Cardiac septum (tissue), 1 donor: ENCODE measurements at regions of chrX and their contacts with region 1.

Region 1: DNA sequence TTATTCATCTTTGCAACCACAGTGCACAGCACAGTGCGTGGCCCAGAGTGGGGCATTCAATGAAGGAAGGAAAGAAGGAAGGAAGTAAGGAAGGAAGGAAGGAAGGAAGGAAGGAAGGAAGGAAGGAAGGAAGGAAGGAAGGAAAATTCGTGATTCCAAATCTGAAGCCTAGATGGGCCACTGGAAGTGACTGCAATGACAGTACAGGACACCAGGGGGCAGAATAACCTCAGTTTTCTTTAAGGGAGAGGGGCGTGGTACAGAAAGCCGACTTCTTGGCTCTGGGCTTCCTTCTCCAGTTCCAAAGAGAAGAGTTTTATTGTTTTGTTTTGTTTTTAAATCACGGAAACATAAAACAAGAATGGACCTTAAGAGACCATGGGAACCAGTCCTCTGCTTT is 47.8 kb downstream of the APLN start:
- DNase-seq: no peak

Region 2: DNA sequence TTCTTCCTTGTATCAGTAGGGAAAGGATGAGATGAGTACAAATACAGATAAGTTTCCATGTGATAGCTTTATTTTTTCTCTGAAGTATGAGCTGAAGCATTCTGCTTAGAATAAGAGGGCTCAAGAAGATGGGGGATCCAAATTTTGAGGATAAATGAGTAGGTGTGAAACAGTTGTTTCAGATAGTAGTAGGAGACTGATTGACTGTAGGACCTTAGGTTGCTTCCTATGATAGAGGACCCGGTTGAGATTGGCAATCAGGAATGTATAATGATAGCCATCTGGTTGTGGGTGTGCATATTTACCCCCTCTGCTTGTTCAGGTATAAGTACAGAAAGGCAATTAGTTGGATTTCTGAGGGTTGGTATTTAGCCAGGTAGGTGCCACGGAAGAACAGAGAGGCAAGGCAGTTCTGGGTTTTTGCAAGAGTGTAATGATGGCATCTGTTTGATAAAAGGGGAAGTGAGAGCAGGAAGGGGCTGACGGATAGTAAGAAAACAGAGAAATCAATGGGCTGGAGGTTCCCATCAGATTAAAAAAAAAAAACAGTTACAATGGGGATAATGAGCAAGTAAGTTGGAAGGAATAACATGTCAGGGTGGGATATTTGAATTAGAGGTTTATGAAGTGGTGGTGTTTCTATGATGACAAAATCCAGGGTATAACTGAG is 53.2 kb before region 1 on chrX:
- intact Hi-C with region 1: no loop called
- DNase-seq: no peak

Region 3: DNA sequence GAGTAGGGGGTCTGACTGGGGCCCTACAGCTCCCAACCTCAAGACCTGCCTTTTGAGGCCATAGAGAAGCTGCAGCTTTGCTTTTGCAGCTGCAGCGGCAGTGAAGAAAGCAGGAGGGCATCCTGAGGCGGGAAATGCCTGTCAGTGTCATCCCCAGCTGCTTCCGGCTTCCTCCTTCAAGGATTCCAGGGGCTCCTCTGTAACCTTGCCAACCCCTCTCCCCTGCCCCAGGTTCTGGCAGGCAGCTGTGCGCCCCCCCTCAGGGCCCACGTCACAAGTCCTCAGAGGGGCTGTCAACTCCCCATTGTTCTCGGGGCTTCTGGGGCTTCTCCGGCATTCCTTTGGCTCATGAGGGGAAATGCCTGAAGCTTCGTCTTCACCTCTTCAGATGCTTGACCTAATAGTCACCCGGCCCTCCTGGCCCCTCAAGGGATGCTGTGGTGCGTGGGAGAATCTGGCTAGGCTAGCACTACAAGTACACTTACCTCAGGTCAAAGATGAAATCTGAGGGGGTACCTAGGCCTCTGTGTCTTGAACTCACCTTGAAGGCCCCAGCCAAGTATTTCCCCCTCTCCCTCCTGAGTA is 15.9 kb after region 1 on chrX:
- intact Hi-C with region 1: no loop called
- DNase-seq: no peak

Region 4: GRCh38 chrX:129665910-129666644 is 59.2 kb after region 1 on chrX:
- intact Hi-C with region 1: no loop called
- DNase-seq: no peak

Region 5: DNA sequence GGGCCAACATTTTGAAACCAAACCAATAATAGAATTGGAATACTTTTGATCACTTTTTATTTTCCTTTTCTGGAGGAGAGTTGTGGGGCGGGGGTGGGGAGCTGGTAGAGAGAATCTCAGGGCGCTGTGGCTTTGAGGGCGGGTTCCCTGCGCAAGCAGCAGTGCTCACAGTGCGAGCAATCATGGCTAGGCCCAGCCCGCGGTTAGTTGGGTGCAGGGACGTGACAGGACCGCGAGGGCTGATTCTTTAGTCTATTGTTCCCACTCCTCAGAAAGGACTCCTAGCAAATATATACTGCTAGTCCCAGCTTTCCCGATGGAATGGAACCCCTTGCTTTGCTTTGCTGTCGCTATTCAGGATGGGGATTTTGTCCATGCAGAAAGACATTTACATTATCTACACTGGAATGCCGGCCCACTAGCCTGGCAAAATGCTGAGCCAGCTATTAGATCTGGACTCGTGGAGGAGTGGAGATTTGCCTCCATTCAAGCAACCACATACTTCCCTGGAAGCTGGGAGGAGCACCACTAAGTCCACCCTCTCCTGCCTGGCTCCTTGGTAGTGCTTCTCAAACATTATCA is 71.8 kb after region 1 on chrX:
- intact Hi-C with region 1: no loop called
- DNase-seq: no peak

Region 6: DNA sequence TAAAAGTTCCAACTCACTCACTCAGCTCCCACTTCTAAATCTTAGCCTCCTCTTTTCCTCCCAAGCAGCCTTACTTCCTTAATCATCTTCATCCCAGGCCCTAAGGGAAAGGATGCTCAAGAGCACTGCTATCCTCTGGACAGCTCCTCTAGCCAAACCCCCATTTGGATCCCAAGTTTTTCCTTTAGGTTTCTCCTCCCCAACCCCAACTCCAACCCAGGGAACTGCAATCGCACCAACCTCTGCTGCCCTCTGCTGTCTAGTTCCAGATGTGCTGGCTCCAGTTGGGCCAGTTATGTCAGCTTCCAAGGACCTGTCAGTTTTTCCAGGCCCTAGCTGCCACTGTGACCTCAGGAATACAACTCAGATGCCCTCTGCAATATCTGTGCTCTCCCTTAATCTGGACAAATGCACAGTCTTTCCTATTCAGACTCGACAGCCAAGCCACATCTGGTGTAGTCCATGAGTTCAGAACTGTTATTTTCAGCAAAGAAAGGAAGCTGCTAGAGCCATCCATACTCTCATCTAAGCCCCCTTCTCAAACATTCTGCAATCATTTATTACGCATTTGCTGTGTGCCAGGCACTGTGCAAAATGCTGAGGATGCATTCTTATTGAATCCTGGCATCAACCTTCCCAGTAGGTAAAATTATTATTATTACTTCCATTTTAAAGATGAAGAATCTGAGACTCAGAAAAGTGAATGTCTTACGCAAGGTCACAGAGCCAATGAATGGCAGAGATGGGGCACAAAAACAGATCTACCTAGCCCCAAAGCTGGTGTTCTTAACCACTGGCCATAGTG is 119.6 kb after region 1 on chrX:
- intact Hi-C with region 1: loop called (anchors 2 kb)
- DNase-seq: peak; percentile 81

Region 7: DNA sequence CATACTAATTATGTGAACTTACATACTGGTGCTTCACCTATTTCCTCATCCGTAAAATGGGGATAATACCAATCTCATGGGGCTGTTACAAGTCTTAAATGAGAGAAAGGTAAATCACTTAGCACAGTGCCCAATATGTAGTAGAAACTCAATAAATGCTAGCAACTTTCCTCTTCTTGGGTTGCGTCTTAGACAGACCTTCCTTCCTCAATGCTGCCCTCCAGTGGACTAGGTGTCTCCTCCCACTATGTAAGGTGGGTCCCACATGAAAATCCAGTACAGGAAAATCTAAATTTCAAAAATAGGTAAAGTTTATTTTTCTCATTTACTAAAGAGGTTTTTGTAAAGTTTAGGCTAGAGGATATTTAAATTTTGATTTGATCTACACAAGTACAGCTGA is 216.2 kb after region 1 on chrX:
- intact Hi-C with region 1: loop called (anchors 5 kb)
- DNase-seq: no peak

Region 8: GRCh38 chrX:129905787-129906580 is 299.1 kb after region 1 on chrX and contains the start of gene UTP14A:
- intact Hi-C with region 1: loop called (anchors 10 kb)
- DNase-seq: peak; percentile 93
- total RNA-seq, gene UTP14A: 8.9 TPM

Region 9: DNA sequence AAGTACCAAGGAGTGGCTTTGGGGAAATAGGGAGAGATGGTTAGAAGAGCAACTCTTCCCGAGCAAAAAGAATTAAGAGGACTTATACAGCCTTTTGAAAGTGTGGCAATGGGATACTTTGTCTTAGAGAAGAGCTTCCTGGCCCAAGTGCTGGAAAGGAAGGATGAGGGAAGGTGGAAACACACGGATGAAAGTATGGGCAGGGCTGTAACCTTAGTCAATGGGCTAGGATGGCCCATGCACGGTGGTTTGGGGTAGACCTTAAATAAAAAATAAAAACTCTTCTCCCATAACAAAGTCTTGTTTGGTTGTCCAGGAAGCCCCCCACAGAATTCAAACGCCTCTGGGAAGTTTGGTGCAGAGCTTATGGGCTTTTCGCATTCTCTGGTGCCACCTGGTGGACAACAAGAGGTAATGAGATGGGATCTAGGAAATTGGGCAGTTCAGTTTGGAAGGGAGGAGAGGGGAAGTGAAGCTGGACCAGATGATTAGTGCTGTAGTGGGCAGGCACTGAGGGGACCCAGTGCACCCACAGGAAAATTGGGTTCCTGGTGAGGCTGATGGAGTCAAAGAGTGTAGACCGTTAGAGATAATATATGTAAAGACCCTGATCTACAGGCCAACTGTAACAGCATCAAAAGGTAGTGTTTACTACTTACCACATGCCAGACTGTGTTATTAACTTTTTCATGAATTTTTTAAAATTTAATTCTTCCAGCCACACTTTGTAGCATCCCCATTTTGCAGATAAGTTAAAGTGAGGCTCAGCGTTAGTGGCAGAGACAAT is 1309.9 kb after region 1 on chrX:
- intact Hi-C with region 1: loop called (anchors 5 kb)
- DNase-seq: no peak